Activated B cell treated with CpG ODN at 0.5 μM for 24 hours (primary cell): ENCODE measurements at regions of chr7 and their contacts with region 1.

Region 1: GRCh38 chr7:100407285-100408180 is 21.0 kb downstream of the ZCWPW1 start:
- DNase-seq: no peak
- ATAC-seq: peak; percentile 96
- H3K4me3 Mint-ChIP-seq: no peak overlapping the region
- H3K27ac Mint-ChIP-seq: no peak overlapping the region
- H3K4me1 Mint-ChIP-seq: peaks cover 7% of the 10 kb centered on the region
- H3K27me3 Mint-ChIP-seq: no peaks in the 10 kb centered on the region
- CTCF ChIP-seq: peak; percentile 54

Region 2: DNA sequence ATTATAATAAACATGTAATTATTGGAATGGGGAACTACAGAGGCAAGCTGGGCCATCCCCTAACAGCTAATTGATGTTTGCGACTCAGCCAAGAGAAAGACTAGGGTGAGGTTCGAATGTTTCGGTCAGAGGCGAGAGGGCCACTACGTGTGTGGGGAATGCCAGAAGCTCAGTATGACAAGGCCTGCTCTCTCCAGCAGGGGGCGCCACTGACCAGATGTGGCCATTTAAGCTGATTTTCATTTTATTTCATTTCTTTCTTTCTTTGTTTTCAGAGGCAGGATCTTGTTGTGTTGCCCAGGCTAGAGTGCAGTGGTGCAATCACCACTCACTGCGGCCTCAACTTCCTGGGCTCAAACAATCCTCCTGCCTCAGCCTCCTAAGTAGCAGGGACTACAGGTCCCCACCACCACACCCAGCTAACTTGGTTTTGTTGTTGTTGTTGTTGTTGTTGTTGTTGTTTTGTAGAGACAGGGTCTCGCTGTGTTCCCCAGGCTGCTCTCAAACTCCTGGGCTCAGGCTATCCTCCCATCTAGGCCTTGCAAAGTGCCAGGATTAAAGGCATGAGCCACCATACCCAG is 1575.8 kb before region 1 on chr7:
- CTCF ChIA-PET with region 1: no interaction called
- POLR2A ChIA-PET with region 1: no interaction called
- intact Hi-C with region 1: no loop called
- DNase-seq: no peak
- ATAC-seq: no peak
- H3K4me3 Mint-ChIP-seq: no peak overlapping the region
- H3K27ac Mint-ChIP-seq: no peak overlapping the region
- H3K4me1 Mint-ChIP-seq: no peaks in the 10 kb centered on the region
- H3K27me3 Mint-ChIP-seq: peaks cover 5% of the 10 kb centered on the region
- CTCF ChIP-seq: no peak

Region 3: GRCh38 chr7:100190048-100190711 is 217.4 kb before region 1 on chr7:
- CTCF ChIA-PET with region 1: interaction called, 7 read pairs
- POLR2A ChIA-PET with region 1: no interaction called
- intact Hi-C with region 1: loop called (anchors 1 kb)
- DNase-seq: no peak
- ATAC-seq: peak; percentile 74
- H3K4me3 Mint-ChIP-seq: peak overlapping the region; percentile 32
- H3K27ac Mint-ChIP-seq: peak overlapping the region; percentile 91
- H3K4me1 Mint-ChIP-seq: peaks cover 57% of the 10 kb centered on the region
- H3K27me3 Mint-ChIP-seq: no peaks in the 10 kb centered on the region
- CTCF ChIP-seq: no peak

Region 4: GRCh38 chr7:100358027-100358865 is 49.3 kb before region 1 on chr7 and contains the start of gene PILRB:
- CTCF ChIA-PET with region 1: interaction called, 35 read pairs
- POLR2A ChIA-PET with region 1: no interaction called
- intact Hi-C with region 1: loop called (anchors 1 kb)
- DNase-seq: no peak
- ATAC-seq: peak; percentile 90
- H3K4me3 Mint-ChIP-seq: no peak within 1 kb of the TSS
- H3K27ac Mint-ChIP-seq: peak within 1 kb of the TSS; percentile 63
- H3K4me1 Mint-ChIP-seq: peaks cover 26% of the 10 kb centered on the region
- H3K27me3 Mint-ChIP-seq: no peaks in the 10 kb centered on the region
- CTCF ChIP-seq: no peak
- total RNA-seq, gene PILRB: 65.8 and 79.4 TPM in 2 replicates

Region 5: DNA sequence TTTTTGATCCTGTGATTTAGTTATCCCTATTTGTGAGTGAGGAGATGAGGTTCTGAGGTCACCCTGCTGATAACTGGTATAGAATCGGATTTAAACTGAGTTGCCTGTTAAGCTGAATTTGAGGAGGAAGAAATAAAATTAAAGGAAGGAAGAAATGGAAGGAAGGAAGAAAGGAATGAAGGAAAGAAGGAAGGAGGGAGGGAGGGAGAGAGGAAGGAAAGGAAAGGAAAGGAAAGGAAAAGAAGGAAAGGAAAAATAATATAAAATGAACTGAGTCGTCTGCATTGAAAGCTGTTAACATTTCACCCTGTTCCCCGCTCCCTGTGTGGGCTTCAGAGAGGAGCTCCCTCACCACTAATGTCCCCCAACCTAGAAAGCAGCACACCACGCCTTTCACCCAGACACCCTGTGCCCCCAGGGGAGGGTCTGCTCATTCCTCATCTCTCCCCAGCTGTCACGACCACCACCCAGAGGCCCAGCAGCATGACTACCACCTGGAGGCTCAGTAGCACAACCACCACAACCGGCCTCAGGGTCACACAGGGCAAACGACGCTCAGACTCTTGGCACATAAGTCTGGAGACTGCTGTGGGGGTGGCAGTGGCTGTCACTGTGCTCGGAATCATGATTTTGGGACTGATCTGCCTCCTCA is 18.0 kb before region 1 on chr7:
- CTCF ChIA-PET with region 1: interaction called, 5 read pairs
- POLR2A ChIA-PET with region 1: interaction called, 18 read pairs
- intact Hi-C with region 1: no loop called
- DNase-seq: no peak
- ATAC-seq: no peak
- H3K4me3 Mint-ChIP-seq: no peak overlapping the region
- H3K27ac Mint-ChIP-seq: no peak overlapping the region
- H3K4me1 Mint-ChIP-seq: peaks cover 27% of the 10 kb centered on the region
- H3K27me3 Mint-ChIP-seq: no peaks in the 10 kb centered on the region
- CTCF ChIP-seq: no peak

Region 6: GRCh38 chr7:100435401-100436304 is 28.1 kb after region 1 on chr7:
- CTCF ChIA-PET with region 1: interaction called, 16 read pairs
- POLR2A ChIA-PET with region 1: interaction called, 34 read pairs
- intact Hi-C with region 1: no loop called
- DNase-seq: peak; percentile 48
- ATAC-seq: peak; percentile 23
- H3K4me3 Mint-ChIP-seq: peak overlapping the region; percentile 91
- H3K27ac Mint-ChIP-seq: peak overlapping the region; percentile 86
- H3K4me1 Mint-ChIP-seq: peaks cover 54% of the 10 kb centered on the region
- H3K27me3 Mint-ChIP-seq: no peaks in the 10 kb centered on the region
- CTCF ChIP-seq: no peak

Region 7: GRCh38 chr7:101077303-101078089 is 670.0 kb after region 1 on chr7:
- CTCF ChIA-PET with region 1: no interaction called
- POLR2A ChIA-PET with region 1: no interaction called
- intact Hi-C with region 1: no loop called
- DNase-seq: peak; percentile 67
- ATAC-seq: peak; percentile 94
- H3K4me3 Mint-ChIP-seq: peak overlapping the region; percentile 8
- H3K27ac Mint-ChIP-seq: peak overlapping the region; percentile 33
- H3K4me1 Mint-ChIP-seq: peaks cover 9% of the 10 kb centered on the region
- H3K27me3 Mint-ChIP-seq: no peaks in the 10 kb centered on the region
- CTCF ChIP-seq: peak; percentile 32